K562 (cell line): ENCODE measurements at regions of chr15 and their contacts with region 1.

Region 1: GRCh38 chr15:68229386-68230156 is at the start of gene CLN6:
- DNase-seq: peak; percentile 87 to 96 (median 96)
- ATAC-seq: peak; percentile 91
- H3K4me3 ChIP-seq: peak within 1 kb of the TSS; percentile 93
- H3K27ac ChIP-seq: peak within 1 kb of the TSS; percentile 95
- H3K4me1 ChIP-seq: peaks cover 39 to 43% of the 10 kb centered on the region in 2 experiments
- H3K27me3 ChIP-seq: no peaks in the 10 kb centered on the region
- CTCF ChIP-seq: no peak
- EP300 ChIP-seq: no peak
- POLR2A ChIP-seq: peak; percentile 78
- RAD21 ChIP-seq: 0 out of 4 replicates have a peak, but pooled peaks of 1 of the 2 experiments have one; percentile 34
- polyA plus RNA-seq, gene CLN6: 0.71 to 0.77 TPM

Region 2: DNA sequence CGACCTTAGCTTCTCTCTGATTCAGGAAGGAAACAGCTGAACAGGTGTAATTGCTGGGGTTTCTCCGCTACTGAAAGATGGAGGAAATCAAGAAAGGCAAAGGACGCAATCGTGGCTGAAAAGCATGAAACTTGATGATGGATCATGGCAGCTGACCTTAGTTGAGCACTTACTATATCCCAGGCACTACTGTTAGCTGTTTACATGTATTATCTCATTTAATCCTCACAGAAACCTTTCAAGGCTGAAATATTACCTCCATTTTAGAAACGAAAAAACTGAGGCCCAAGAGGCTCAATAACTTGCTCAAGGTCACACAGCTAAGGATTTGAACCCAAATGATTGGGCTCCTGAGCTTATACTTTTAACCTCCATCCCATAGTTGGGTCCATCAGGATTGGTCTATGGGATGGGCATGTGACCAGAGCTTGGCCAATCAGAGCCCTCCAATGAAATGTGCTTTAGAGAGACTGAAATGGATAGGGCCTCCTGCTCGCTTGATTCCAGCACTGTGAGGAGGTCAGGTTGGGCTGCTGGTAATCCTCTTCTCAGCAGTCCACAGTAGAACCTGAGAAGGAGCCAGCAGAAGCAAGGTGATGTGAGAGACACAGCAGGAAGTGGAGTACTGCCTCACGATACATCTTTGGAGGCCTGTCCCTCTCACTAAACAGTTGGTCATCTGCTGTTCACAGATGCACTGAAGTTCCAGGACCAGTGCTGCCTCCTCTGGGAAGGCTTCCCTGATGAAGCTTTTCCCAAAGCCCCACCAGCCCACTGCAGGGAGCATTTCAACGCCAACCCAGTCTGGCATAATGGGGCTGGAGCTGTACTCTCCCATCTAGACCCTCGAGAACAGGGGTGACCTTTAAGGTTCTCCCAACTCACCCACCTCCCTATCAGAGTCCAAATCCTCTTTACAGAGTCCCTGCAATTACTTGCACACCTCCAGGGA is 10.4 kb before region 1 on chr15:
- CTCF ChIA-PET with region 1: no interaction called
- POLR2A ChIA-PET with region 1: interaction called, 18 read pairs
- in situ Hi-C with region 1: no loop called
- intact Hi-C with region 1: no loop called
- DNase-seq: peak in 3 of 4 experiments; percentile 49 to 57 (median 50)
- ATAC-seq: peak; percentile 80
- H3K4me3 ChIP-seq: no peak overlapping the region
- H3K27ac ChIP-seq: no peak overlapping the region
- H3K4me1 ChIP-seq: peaks cover 6 to 15% of the 10 kb centered on the region in 2 experiments; a peak in 4 of 5 replicates
- H3K27me3 ChIP-seq: no peaks in the 10 kb centered on the region
- CTCF ChIP-seq: no peak
- EP300 ChIP-seq: no peak
- POLR2A ChIP-seq: no peak
- RAD21 ChIP-seq: no peak

Region 3: GRCh38 chr15:68447209-68447608 is 217.6 kb after region 1 on chr15:
- CTCF ChIA-PET with region 1: no interaction called
- POLR2A ChIA-PET with region 1: no interaction called
- in situ Hi-C with region 1: no loop called
- intact Hi-C with region 1: no loop called
- DNase-seq: no peak
- ATAC-seq: no peak
- H3K4me3 ChIP-seq: no peak overlapping the region
- H3K27ac ChIP-seq: no peak overlapping the region
- H3K4me1 ChIP-seq: no peaks in the 10 kb centered on the region
- H3K27me3 ChIP-seq: peaks cover 0 to 6% of the 10 kb centered on the region in 2 experiments; a peak in 1 of 5 replicates
- CTCF ChIP-seq: no peak
- EP300 ChIP-seq: no peak
- POLR2A ChIP-seq: no peak
- RAD21 ChIP-seq: no peak